ENCODE measurements at regions of chr7 and their contacts with region 1.

Region 1: GRCh38 chr7:26200444-26201246 is at the start of gene HNRNPA2B1:
- DNase-seq: peak; percentile 99
- ATAC-seq: peak; percentile 72
- H3K4me3 Mint-ChIP-seq: peak within 1 kb of the TSS; percentile 100
- H3K27ac Mint-ChIP-seq: peak within 1 kb of the TSS; percentile 100
- H3K4me1 Mint-ChIP-seq: peaks cover 35% of the 10 kb centered on the region
- H3K27me3 Mint-ChIP-seq: no peaks in the 10 kb centered on the region
- total RNA-seq, gene HNRNPA2B1: 882 to 899 TPM

Region 2: GRCh38 chr7:26078437-26079336 is 122.0 kb before region 1 on chr7:
- CTCF ChIA-PET with region 1: interaction called, 22 read pairs
- POLR2A ChIA-PET with region 1: interaction called, 187 read pairs
- DNase-seq: peak; percentile 85
- ATAC-seq: peak; percentile 100
- H3K4me3 Mint-ChIP-seq: peak overlapping the region; percentile 19
- H3K27ac Mint-ChIP-seq: no peak overlapping the region
- H3K4me1 Mint-ChIP-seq: peaks cover 11% of the 10 kb centered on the region
- H3K27me3 Mint-ChIP-seq: peaks cover 44% of the 10 kb centered on the region

Region 3: DNA sequence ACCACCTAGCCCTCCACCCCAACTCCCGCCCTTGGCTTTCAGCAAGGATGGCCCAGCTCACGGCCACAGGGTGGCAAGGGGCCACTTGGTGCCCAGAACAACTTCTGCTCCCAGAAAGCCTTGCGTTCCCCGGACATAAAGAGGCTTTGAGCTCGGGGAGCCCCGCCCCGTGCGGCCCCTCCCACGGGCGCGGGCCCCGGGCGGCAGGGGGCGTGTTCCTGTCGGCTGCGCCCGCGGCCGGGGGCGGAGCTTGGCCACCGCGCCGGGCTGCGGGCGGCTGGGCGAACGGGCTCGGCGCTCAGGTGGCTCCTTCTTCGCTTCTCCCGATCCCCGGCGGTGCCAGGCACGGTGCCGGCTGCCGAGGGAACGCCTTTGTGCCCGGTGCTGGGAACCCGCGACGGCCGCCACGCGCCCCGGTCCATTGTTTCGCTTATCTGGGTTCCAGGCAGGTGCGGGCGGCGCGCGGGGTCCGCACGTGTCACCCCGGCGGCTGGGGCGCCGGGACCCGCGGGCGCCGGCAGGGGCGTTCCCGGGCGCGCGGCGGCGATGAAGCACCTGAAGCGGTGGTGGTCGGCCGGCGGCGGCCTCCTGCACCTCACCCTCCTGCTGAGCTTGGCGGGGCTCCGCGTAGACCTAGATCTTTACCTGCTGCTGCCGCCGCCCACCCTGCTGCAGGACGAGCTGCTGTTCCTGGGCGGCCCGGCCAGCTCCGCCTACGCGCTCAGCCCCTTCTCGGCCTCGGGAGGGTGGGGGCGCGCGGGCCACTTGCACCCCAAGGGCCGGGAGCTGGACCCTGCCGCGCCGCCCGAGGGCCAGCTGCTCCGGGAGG is 48.5 kb before region 1 on chr7 and contains the start of gene NFE2L3:
- CTCF ChIA-PET with region 1: interaction called, 28 read pairs
- POLR2A ChIA-PET with region 1: interaction called, 148 read pairs
- DNase-seq: peak; percentile 87
- ATAC-seq: peak; percentile 76
- H3K4me3 Mint-ChIP-seq: peak within 1 kb of the TSS; percentile 92
- H3K27ac Mint-ChIP-seq: peak within 1 kb of the TSS; percentile 98
- H3K4me1 Mint-ChIP-seq: peaks cover 64% of the 10 kb centered on the region
- H3K27me3 Mint-ChIP-seq: no peaks in the 10 kb centered on the region
- total RNA-seq, gene NFE2L3: 9.7 to 10.4 TPM

Region 4: DNA sequence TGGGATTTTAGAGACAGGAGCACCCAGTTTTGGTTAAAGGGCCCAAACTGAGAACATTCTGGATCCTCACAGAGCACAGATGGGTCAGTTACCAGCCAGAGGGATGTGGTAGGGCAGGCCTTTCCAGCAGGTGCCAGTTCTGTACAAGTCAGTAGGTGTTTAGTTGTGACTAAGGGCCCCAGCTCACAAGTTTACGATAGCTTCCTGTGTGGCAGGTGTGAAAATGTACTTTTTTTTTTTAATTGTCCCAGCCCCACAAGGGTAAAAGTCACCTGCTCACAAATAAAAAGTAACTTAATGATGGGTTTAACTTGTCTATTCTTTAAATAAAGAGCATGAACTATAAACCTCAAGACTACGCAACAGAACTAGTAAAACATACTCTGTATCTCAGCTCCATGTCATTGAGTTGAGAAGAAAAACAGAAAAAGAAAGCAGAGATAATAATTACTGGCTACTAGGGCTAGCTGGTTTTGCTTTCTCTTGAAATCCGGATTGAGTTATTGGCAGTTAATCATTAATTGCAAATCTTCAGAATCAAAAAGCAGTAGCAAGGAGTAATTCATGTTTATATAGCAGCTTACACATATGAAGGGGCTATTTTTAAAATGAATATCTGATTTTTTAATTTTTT is 33.2 kb before region 1 on chr7:
- CTCF ChIA-PET with region 1: interaction called, 6 read pairs
- POLR2A ChIA-PET with region 1: interaction called, 23 read pairs
- DNase-seq: peak; percentile 43
- ATAC-seq: peak; percentile 82
- H3K4me3 Mint-ChIP-seq: no peak overlapping the region
- H3K27ac Mint-ChIP-seq: peak overlapping the region; percentile 71
- H3K4me1 Mint-ChIP-seq: peaks cover 42% of the 10 kb centered on the region
- H3K27me3 Mint-ChIP-seq: no peaks in the 10 kb centered on the region

Region 5: DNA sequence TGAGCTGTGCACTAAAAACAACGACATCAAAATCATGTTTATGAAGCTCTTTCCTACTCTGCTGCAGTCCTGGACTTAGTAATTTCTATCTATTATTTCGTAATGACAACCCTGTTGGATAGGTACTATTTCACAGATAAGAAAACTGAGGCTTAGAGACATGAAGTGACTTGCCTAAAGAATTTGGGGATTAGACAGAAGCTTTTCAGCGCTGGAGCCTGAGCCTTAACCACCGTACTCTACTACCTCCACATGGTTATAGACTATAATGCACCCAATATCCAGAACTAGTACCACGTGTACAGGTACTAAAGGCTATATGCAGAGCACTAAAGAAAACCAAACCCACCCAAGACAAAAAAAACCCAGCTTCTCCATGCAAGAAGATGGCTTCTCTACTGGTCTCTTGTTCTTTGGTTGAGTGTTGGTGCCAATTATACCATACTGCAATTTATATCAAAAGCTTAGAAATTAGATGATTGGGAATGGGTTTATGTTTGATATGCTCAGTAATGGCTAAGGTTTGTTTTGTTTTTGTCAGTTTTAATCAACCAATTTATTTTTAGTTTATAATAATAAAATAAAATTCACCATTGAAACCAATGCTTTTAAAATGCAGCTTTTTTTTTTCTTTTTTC is 84.5 kb after region 1 on chr7:
- CTCF ChIA-PET with region 1: interaction called, 14 read pairs
- POLR2A ChIA-PET with region 1: interaction called, 3 read pairs
- DNase-seq: no peak
- ATAC-seq: peak; percentile 73
- H3K4me3 Mint-ChIP-seq: no peak overlapping the region
- H3K27ac Mint-ChIP-seq: no peak overlapping the region
- H3K4me1 Mint-ChIP-seq: peaks cover 4% of the 10 kb centered on the region
- H3K27me3 Mint-ChIP-seq: peaks cover 8% of the 10 kb centered on the region

Measured in activated CD8-positive, alpha-beta T cell treated with anti-CD3 and anti-CD28 coated beads, Interleukin-2, amount 10 ng/mL, durations not matched to agents 7 days and 5 days (primary cell).